B cell (primary cell): ENCODE measurements at regions of chr7 and their contacts with region 1.

Region 1: DNA sequence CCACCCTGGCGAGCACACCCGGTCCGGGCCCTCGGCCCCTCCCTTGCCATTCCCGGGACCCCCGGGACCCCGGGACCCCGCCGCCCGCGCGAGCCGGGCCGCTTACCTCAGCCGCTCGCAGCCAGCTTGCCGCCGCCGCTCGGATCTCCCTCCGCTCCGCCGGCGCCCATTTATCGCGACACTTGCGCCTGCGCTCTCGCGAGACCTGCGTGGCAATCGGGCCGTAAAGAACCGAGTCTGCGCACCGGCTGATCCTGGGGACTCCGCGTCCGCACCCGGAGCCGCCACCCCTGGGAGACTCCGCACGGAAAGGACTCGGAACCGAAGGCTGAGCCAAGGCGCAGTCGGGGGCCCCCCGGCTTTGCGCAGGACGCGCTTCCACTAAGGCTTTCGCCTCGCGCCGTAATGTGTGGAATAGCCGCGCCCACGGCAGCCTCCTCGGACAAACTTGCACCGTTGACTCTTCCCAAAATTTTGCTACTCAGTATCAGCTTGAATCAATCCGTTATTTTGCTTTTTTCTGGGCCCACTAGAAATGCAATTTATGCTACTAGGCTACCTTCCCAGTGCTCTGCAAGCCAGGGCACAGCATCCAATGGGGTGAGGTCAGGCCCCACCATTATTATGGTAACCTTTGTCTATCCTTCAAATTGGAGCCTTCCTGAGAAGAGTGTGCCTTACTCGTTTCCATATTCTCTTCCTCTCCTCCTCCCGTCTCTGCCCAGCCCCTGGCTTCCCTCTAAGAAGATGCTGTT is at the start of gene MAD1L1:
- DNase-seq: peak; percentile 93
- ATAC-seq: peak; percentile 69
- H3K4me3 ChIP-seq: peak within 1 kb of the TSS; percentile 84 to 100 (median 93)
- H3K4me3 Mint-ChIP-seq: peak within 1 kb of the TSS; percentile 91
- H3K27ac ChIP-seq: peak within 1 kb of the TSS; percentile 72 to 76
- H3K27ac Mint-ChIP-seq: peak within 1 kb of the TSS; percentile 87
- H3K4me1 ChIP-seq: peaks cover 34 to 43% of the 10 kb centered on the region in 2 donors
- H3K4me1 Mint-ChIP-seq: peaks cover 51% of the 10 kb centered on the region
- H3K27me3 ChIP-seq: no peaks in the 10 kb centered on the region
- H3K27me3 Mint-ChIP-seq: no peaks in the 10 kb centered on the region
- CTCF ChIP-seq: no peak
- total RNA-seq, gene MAD1L1: 106 and 110 TPM in 2 replicates

Region 2: GRCh38 chr7:1569833-1570633 is 662.9 kb before region 1 on chr7 and contains the start of gene PSMG3:
- CTCF ChIA-PET with region 1: no interaction called
- POLR2A ChIA-PET with region 1: no interaction called
- intact Hi-C with region 1: loop called (anchors 10 kb)
- DNase-seq: peak; percentile 92
- ATAC-seq: peak; percentile 91
- H3K4me3 ChIP-seq: peak within 1 kb of the TSS; percentile 18 to 87 (median 80)
- H3K4me3 Mint-ChIP-seq: peak within 1 kb of the TSS; percentile 90
- H3K27ac ChIP-seq: peak within 1 kb of the TSS; percentile 84 to 89
- H3K27ac Mint-ChIP-seq: peak within 1 kb of the TSS; percentile 91
- H3K4me1 ChIP-seq: peaks cover 12 to 24% of the 10 kb centered on the region in 2 donors
- H3K4me1 Mint-ChIP-seq: peaks cover 20% of the 10 kb centered on the region
- H3K27me3 ChIP-seq: no peaks in the 10 kb centered on the region
- H3K27me3 Mint-ChIP-seq: no peaks in the 10 kb centered on the region
- CTCF ChIP-seq: peak; percentile 30
- total RNA-seq, gene PSMG3: 27.4 and 28.6 TPM in 2 replicates

Region 3: GRCh38 chr7:2087744-2088143 is 145.2 kb before region 1 on chr7:
- CTCF ChIA-PET with region 1: no interaction called
- POLR2A ChIA-PET with region 1: no interaction called
- intact Hi-C with region 1: no loop called
- DNase-seq: no peak
- ATAC-seq: no peak
- H3K4me3 ChIP-seq: no peak overlapping the region
- H3K4me3 Mint-ChIP-seq: no peak overlapping the region
- H3K27ac ChIP-seq: no peak overlapping the region
- H3K27ac Mint-ChIP-seq: no peak overlapping the region
- H3K4me1 ChIP-seq: peaks cover 4 to 13% of the 10 kb centered on the region in 2 donors
- H3K4me1 Mint-ChIP-seq: peaks cover 13% of the 10 kb centered on the region
- H3K27me3 ChIP-seq: no peaks in the 10 kb centered on the region
- H3K27me3 Mint-ChIP-seq: no peaks in the 10 kb centered on the region
- CTCF ChIP-seq: no peak

Region 4: DNA sequence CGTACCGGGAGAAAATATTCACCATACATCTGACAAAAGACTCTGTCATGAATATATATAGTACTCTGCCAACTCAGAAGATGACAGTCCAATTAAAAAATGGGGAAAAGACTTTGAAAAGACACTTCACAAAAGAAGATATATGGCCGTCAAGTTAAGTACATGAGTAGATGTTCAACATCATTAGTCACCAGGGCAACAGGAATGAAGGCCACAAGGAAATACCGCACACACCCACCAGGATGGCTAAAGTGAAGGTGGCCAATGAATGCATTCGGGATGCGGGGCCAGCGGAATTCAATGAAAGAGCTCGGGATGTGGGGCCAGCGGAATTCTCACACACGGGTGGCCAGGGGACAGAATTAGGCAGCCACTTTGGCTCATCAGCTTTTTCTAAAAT is 42.4 kb before region 1 on chr7:
- CTCF ChIA-PET with region 1: no interaction called
- POLR2A ChIA-PET with region 1: no interaction called
- intact Hi-C with region 1: no loop called
- DNase-seq: no peak
- ATAC-seq: no peak
- H3K4me3 ChIP-seq: no peak overlapping the region
- H3K4me3 Mint-ChIP-seq: no peak overlapping the region
- H3K27ac ChIP-seq: no peak overlapping the region
- H3K27ac Mint-ChIP-seq: no peak overlapping the region
- H3K4me1 ChIP-seq: no peaks in the 10 kb centered on the region
- H3K4me1 Mint-ChIP-seq: no peaks in the 10 kb centered on the region
- H3K27me3 ChIP-seq: no peaks in the 10 kb centered on the region
- H3K27me3 Mint-ChIP-seq: no peaks in the 10 kb centered on the region
- CTCF ChIP-seq: no peak

Region 5: GRCh38 chr7:2261611-2262010 is 28.7 kb after region 1 on chr7:
- CTCF ChIA-PET with region 1: interaction called, 6 read pairs
- POLR2A ChIA-PET with region 1: interaction called, 6 read pairs
- intact Hi-C with region 1: loop called (anchors 2 kb)
- DNase-seq: peak; percentile 96
- ATAC-seq: peak; percentile 68
- H3K4me3 ChIP-seq: peak overlapping the region; percentile 18 to 44 (median 34)
- H3K4me3 Mint-ChIP-seq: peak overlapping the region; percentile 85
- H3K27ac ChIP-seq: peak overlapping the region; percentile 96 to 98
- H3K27ac Mint-ChIP-seq: peak overlapping the region; percentile 97
- H3K4me1 ChIP-seq: peaks cover 25 to 44% of the 10 kb centered on the region in 2 donors
- H3K4me1 Mint-ChIP-seq: peaks cover 40% of the 10 kb centered on the region
- H3K27me3 ChIP-seq: no peaks in the 10 kb centered on the region
- H3K27me3 Mint-ChIP-seq: no peaks in the 10 kb centered on the region
- CTCF ChIP-seq: no peak

Region 6: DNA sequence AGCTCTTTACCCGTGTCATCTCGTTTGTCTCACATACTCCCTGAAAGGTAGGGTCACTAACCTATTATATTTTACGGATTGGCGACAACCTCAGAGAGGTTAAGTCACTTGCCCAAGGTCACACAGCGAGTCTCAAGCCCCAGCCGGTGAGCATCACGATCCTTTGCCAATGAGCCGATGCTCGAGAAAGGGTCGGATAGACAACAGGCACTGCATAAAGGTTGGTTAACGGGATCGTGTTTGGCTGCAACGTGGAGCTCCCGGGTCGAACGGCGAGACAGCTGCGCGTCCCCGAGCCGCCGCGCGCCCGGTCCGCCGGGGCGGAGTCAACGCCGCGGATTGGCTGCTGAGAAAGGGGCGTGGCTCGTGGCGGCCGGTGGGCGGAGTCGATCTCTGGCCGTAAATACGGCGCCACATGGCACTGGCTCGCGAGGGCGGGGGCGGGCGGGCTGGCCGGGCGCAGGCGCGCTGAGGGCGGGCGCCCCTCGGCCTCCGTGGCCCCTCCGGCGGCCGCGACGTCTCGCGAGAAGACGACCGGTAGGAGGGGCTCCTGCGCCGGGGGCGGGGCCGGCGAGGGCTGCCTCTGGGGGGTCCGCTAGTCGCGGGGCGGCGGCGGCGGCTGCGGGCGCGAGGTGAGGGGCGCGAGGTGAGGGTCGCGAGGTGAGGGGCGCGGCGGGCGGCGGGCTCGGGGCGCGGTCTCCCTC is 170.2 kb after region 1 on chr7 and contains the start of gene CHST12:
- CTCF ChIA-PET with region 1: no interaction called
- POLR2A ChIA-PET with region 1: no interaction called
- intact Hi-C with region 1: loop called (anchors 5 kb)
- DNase-seq: peak; percentile 98
- ATAC-seq: peak; percentile 78
- H3K4me3 ChIP-seq: peak within 1 kb of the TSS; percentile 50 to 83 (median 77)
- H3K4me3 Mint-ChIP-seq: peak within 1 kb of the TSS; percentile 88
- H3K27ac ChIP-seq: peak within 1 kb of the TSS; percentile 27 to 72
- H3K27ac Mint-ChIP-seq: peak within 1 kb of the TSS; percentile 86
- H3K4me1 ChIP-seq: peaks cover 33 to 55% of the 10 kb centered on the region in 2 donors
- H3K4me1 Mint-ChIP-seq: peaks cover 46% of the 10 kb centered on the region
- H3K27me3 ChIP-seq: no peaks in the 10 kb centered on the region
- H3K27me3 Mint-ChIP-seq: no peaks in the 10 kb centered on the region
- CTCF ChIP-seq: no peak
- total RNA-seq, gene CHST12: 25.4 TPM in 2 replicates

Region 7: DNA sequence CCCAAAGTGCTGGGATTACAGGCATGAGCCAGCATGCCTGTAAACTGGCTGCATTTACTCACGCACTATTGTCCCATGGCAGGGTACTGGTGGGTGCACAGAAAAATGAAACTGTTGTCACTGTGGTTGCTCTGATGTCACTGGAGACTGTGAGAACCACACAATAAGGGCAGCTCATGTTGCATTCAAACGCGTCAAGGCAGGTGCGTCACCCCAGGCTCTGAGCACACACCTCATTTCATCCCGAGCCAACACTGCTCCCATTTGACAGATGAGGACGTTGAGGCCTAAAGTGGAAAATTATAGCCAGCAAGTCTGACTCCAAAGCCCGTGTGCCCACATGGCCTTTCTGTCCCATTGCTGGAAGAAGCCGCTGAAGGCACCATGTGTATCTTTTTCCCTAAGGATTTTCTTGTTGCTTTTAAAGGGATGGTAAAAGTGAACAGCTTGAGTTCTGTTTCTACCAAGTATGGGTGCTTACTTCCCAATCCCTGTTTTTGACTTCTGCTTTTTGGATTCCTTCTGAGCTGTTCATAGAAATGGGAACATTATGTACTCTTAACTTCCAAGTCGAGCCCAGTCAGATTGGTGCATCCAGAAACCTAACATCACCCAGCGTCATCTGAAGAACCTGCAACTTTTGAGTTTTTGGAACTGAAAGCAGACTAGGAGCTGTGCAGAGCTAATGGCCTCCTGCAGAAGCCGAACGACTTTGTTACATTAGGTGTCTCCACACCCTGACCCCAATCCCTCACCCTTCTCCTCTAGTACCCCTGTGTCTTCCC is 870.9 kb after region 1 on chr7:
- CTCF ChIA-PET with region 1: no interaction called
- POLR2A ChIA-PET with region 1: no interaction called
- intact Hi-C with region 1: no loop called
- DNase-seq: no peak
- ATAC-seq: no peak
- H3K4me3 ChIP-seq: no peak overlapping the region
- H3K4me3 Mint-ChIP-seq: no peak overlapping the region
- H3K27ac ChIP-seq: no peak overlapping the region
- H3K27ac Mint-ChIP-seq: no peak overlapping the region
- H3K4me1 ChIP-seq: no peaks in the 10 kb centered on the region
- H3K4me1 Mint-ChIP-seq: no peaks in the 10 kb centered on the region
- H3K27me3 ChIP-seq: no peaks in the 10 kb centered on the region
- H3K27me3 Mint-ChIP-seq: peaks cover 3% of the 10 kb centered on the region
- CTCF ChIP-seq: no peak

Region 8: DNA sequence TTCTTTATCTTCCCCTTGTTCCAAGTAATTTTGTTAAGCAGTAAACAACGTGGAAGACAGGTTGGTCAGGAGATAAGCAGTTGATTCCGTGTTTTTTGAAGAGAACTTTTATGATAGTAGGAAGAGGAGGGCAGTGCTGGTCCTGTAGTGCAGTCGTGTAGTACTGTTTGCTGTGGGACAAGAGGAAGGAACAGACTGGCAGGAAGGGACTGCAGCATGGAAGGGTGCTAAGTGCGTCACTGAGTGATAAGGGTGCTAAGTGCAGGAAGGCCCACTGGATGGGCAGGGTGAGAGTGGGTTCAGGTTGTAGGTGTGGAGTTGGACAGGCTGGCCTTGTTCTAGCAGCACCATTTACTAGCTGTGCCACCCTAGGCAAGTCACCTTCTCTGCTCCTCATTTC is 1193.1 kb after region 1 on chr7:
- CTCF ChIA-PET with region 1: no interaction called
- POLR2A ChIA-PET with region 1: no interaction called
- intact Hi-C with region 1: no loop called
- DNase-seq: no peak
- ATAC-seq: no peak
- H3K4me3 ChIP-seq: no peak overlapping the region
- H3K4me3 Mint-ChIP-seq: no peak overlapping the region
- H3K27ac ChIP-seq: no peak overlapping the region
- H3K27ac Mint-ChIP-seq: no peak overlapping the region
- H3K4me1 ChIP-seq: no peaks in the 10 kb centered on the region
- H3K4me1 Mint-ChIP-seq: no peaks in the 10 kb centered on the region
- H3K27me3 ChIP-seq: no peaks in the 10 kb centered on the region
- H3K27me3 Mint-ChIP-seq: peaks cover 4% of the 10 kb centered on the region
- CTCF ChIP-seq: no peak